CD8-positive, alpha-beta memory T cell (primary cell): ENCODE measurements at regions of chr1 and their contacts with region 1.

Region 1: GRCh38 chr1:11719313-11720032 is 16.5 kb upstream of the AGTRAP start:
- DNase-seq: peak; percentile 80 to 90 (median 82)
- H3K4me3 ChIP-seq: peak overlapping the region; percentile 63
- H3K4me3 Mint-ChIP-seq: peak overlapping the region; percentile 67 to 93 (median 84)
- H3K27ac ChIP-seq: peak overlapping the region; percentile 51
- H3K27ac Mint-ChIP-seq: peak overlapping the region; percentile 88 to 98 (median 95)
- H3K4me1 ChIP-seq: peaks cover 12% of the 10 kb centered on the region
- H3K4me1 Mint-ChIP-seq: peaks cover 12 to 16% (median 16%) of the 10 kb centered on the region in 3 donors
- H3K27me3 ChIP-seq: no peaks in the 10 kb centered on the region
- H3K27me3 Mint-ChIP-seq: no peaks in the 10 kb centered on the region

Region 2: GRCh38 chr1:11245904-11246719 is 473.4 kb before region 1 on chr1:
- CTCF ChIA-PET with region 1: interaction called, 13 read pairs
- POLR2A ChIA-PET with region 1: interaction called, 4 read pairs
- DNase-seq: peak in 1 of 5 donors; percentile 57
- H3K4me3 ChIP-seq: no peak overlapping the region
- H3K4me3 Mint-ChIP-seq: peak overlapping the region in 5 of 7 donors; percentile 18 to 79 (median 38)
- H3K27ac ChIP-seq: peak overlapping the region; percentile 3
- H3K27ac Mint-ChIP-seq: peak overlapping the region; percentile 77 to 100 (median 94)
- H3K4me1 ChIP-seq: no peaks in the 10 kb centered on the region
- H3K4me1 Mint-ChIP-seq: peaks cover 29 to 37% (median 33%) of the 10 kb centered on the region in 3 donors
- H3K27me3 ChIP-seq: no peaks in the 10 kb centered on the region
- H3K27me3 Mint-ChIP-seq: no peaks in the 10 kb centered on the region

Region 3: DNA sequence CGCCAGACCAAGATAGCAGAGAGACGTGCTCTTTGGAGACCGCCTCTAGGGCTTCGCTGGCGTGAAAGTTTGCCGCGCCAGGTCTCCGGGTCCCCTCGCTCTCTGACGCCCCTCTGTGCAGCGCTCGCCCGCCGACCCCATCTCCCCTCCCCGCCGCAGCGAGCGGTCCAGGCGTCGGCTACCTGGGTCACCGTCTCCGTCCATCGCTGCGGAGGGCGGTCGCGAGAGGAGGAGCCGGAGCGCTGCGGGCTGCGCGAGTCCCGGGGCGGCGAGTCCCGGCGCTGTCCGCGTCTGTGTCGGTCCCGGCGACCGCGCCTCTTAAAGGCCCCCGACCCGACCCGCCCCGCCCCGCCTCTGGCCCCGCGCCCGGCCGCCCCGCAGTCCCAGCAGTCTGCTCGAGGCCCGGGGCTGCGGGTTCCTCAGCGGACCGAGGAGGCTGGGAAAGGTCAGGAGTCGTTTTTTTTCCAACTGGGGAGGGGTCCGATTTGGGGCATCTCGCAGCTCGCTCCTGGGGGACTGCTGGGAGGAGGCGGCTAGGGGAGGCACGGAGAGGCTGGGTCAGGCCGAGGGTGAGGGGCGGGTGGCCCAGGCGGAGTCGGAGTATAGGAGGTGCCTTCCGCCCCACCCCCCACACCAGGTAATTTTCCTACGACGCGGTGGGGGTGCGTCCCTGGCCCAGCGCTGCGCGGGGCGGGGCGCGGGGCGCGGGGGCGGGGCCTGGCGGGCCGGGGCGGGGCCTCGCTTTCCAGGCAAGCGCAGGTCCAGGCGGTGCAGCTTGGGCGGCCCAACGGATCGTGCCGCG is 65.1 kb before region 1 on chr1 and contains the starts of genes FBXO2 and FBXO44:
- CTCF ChIA-PET with region 1: interaction called, 152 read pairs
- POLR2A ChIA-PET with region 1: interaction called, 29 read pairs
- DNase-seq: peak; percentile 38 to 82 (median 58)
- H3K4me3 ChIP-seq: peak within 1 kb of the TSS; percentile 55
- H3K4me3 Mint-ChIP-seq: peak within 1 kb of the TSS; percentile 69 to 90 (median 75)
- H3K27ac ChIP-seq: peak within 1 kb of the TSS; percentile 31
- H3K27ac Mint-ChIP-seq: peak within 1 kb of the TSS in 4 of 8 donors; percentile 26 to 97 (median 46)
- H3K4me1 ChIP-seq: peaks cover 31% of the 10 kb centered on the region
- H3K4me1 Mint-ChIP-seq: peaks cover 24 to 49% (median 29%) of the 10 kb centered on the region in 3 donors
- H3K27me3 ChIP-seq: no peaks in the 10 kb centered on the region
- H3K27me3 Mint-ChIP-seq: no peaks in the 10 kb centered on the region
- total RNA-seq, gene FBXO2: 1.8 to 2.0 TPM
- total RNA-seq, gene FBXO44: 14.2 to 16.0 TPM

Region 4: GRCh38 chr1:11681071-11681771 is 38.3 kb before region 1 on chr1 and contains the start of gene MAD2L2:
- CTCF ChIA-PET with region 1: interaction called, 17 read pairs
- POLR2A ChIA-PET with region 1: interaction called, 6 read pairs
- DNase-seq: peak; percentile 86 to 92 (median 90)
- H3K4me3 ChIP-seq: peak within 1 kb of the TSS; percentile 78
- H3K4me3 Mint-ChIP-seq: peak within 1 kb of the TSS; percentile 89 to 99 (median 95)
- H3K27ac ChIP-seq: peak within 1 kb of the TSS; percentile 64
- H3K27ac Mint-ChIP-seq: peak within 1 kb of the TSS; percentile 84 to 94 (median 91)
- H3K4me1 ChIP-seq: peaks cover 7% of the 10 kb centered on the region
- H3K4me1 Mint-ChIP-seq: peaks cover 18 to 28% (median 22%) of the 10 kb centered on the region in 3 donors
- H3K27me3 ChIP-seq: no peaks in the 10 kb centered on the region
- H3K27me3 Mint-ChIP-seq: peaks cover 3 to 4% of the 10 kb centered on the region in 2 donors
- total RNA-seq, gene MAD2L2: 60.1 to 66.2 TPM

Region 5: GRCh38 chr1:11735854-11736745 is 16.6 kb after region 1 on chr1 and contains the start of gene AGTRAP:
- CTCF ChIA-PET with region 1: interaction called, 18 read pairs
- POLR2A ChIA-PET with region 1: interaction called, 9 read pairs
- DNase-seq: peak; percentile 73 to 90 (median 82)
- H3K4me3 ChIP-seq: peak within 1 kb of the TSS; percentile 95
- H3K4me3 Mint-ChIP-seq: peak within 1 kb of the TSS; percentile 90 to 99 (median 93)
- H3K27ac ChIP-seq: peak within 1 kb of the TSS; percentile 83
- H3K27ac Mint-ChIP-seq: peak within 1 kb of the TSS; percentile 68 to 97 (median 90)
- H3K4me1 ChIP-seq: peaks cover 64% of the 10 kb centered on the region
- H3K4me1 Mint-ChIP-seq: peaks cover 55 to 71% (median 59%) of the 10 kb centered on the region in 3 donors
- H3K27me3 ChIP-seq: no peaks in the 10 kb centered on the region
- H3K27me3 Mint-ChIP-seq: no peaks in the 10 kb centered on the region
- total RNA-seq, gene AGTRAP: 9.7 to 10.6 TPM